ENCODE measurements at regions of chr9 and their contacts with region 1.

Region 1: DNA sequence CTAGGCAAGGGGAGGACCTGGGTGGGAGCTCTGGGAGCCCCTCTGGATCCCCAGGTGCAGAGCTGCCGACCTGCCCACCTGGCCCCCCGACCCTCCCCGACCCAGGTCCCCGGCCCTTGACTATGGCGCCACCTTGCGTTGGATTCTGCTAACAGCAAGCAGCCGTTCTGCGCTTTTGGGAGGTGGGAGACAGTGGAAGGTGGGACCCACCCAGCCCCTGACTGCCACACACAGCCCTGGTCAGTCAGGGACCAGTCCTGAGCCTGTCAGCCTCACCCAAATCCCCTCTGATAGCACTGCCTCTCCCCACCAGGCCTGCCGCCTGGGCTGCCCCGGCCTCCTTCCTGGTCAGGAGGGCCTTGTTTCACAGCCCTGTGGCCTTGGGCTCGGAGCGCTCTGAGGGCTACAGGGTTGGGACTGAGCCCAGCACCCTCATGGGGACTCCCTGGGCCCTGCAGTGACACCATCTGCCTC is 77.9 kb downstream of the HMCN2 start:
- DNase-seq: peak in 1 of 2 experiments; percentile 95
- H3K4me3 ChIP-seq: no peak overlapping the region
- H3K27ac ChIP-seq: no peak overlapping the region
- H3K4me1 ChIP-seq: peaks cover 0 to 12% (median 6%) of the 10 kb centered on the region in 4 experiments; a peak in 4 of 7 replicates
- H3K27me3 ChIP-seq: no peaks in the 10 kb centered on the region
- CTCF ChIP-seq: peak in 2 of 3 experiments; percentile 78 to 88; a peak in 3 of 4 replicates
- EP300 ChIP-seq: no peak
- POLR2A ChIP-seq: no peak
- RAD21 ChIP-seq: peak; percentile 94 to 96

Region 2: DNA sequence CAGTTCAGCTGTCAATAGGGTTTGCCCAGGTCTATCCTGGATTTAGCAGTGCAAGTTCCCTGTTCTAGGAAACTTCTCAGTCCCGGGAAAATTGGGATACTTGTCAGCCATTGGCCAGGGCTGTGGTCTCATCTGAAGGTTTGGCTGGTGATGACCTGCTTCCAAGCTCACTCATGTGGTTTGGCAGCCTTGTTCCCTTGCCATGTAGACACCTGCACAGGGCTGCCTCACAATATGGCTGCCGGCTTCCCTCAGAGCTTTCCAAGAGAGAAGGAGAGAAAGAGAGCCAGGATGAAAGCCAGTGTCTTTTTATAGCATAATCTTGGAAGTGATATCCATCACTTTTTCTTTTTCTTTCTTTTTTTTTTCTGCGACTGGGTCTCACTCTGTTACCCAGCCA is 115.6 kb before region 1 on chr9:
- CTCF ChIA-PET with region 1: no interaction called
- POLR2A ChIA-PET with region 1: no interaction called
- DNase-seq: no peak
- H3K4me3 ChIP-seq: no peak overlapping the region
- H3K27ac ChIP-seq: no peak overlapping the region
- H3K4me1 ChIP-seq: no peaks in the 10 kb centered on the region; a peak in 1 of 7 replicates
- H3K27me3 ChIP-seq: no peaks in the 10 kb centered on the region
- CTCF ChIP-seq: no peak
- EP300 ChIP-seq: no peak
- POLR2A ChIP-seq: no peak
- RAD21 ChIP-seq: no peak

Region 3: DNA sequence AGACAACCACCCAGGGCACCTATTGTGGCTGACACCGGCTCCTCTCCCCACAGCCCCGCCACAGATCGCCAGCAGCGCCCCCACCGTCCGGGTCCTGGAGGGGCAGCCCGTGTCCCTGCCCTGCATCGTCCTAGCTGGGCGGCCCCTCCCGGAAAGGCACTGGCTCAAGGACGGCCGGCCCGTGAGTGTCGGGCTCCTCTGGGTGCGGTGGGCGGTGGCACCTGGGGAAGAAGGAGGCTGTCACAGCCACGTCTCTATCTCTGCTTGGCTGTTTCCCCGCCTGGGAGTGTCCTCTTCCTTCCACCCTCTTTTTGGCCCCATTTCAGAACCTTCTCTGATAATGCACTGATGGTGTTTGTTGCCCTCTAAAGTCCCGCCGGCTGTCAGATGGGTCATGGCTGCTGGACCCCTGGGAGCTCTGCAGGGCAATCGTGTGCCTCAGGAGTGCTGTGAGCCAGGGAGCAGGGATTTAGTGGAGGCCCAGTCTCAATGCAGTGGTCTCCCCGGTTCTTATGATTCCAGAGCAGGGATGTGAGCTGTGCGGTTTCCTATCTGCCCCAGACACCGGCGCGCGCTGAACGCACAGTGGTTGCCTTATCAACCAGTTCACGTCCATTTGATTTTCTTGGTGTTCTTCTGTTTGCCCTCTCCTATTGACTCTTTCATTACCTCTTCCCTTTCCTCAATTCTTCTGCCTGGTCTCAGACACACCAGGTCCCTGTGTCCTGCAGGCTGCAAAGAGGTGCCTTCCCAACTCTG is 22.6 kb before region 1 on chr9:
- CTCF ChIA-PET with region 1: interaction called, 53 read pairs
- POLR2A ChIA-PET with region 1: no interaction called
- DNase-seq: peak in 1 of 2 experiments; percentile 79
- H3K4me3 ChIP-seq: no peak overlapping the region
- H3K27ac ChIP-seq: no peak overlapping the region
- H3K4me1 ChIP-seq: peaks cover 0 to 7% (median 1%) of the 10 kb centered on the region in 4 experiments; a peak in 4 of 7 replicates
- H3K27me3 ChIP-seq: no peaks in the 10 kb centered on the region
- CTCF ChIP-seq: peak; percentile 37 to 62 (median 44); a peak in 3 of 4 replicates
- EP300 ChIP-seq: no peak
- POLR2A ChIP-seq: no peak
- RAD21 ChIP-seq: peak in 1 of 2 experiments; percentile 42; a peak in 3 of 4 replicates

Region 4: DNA sequence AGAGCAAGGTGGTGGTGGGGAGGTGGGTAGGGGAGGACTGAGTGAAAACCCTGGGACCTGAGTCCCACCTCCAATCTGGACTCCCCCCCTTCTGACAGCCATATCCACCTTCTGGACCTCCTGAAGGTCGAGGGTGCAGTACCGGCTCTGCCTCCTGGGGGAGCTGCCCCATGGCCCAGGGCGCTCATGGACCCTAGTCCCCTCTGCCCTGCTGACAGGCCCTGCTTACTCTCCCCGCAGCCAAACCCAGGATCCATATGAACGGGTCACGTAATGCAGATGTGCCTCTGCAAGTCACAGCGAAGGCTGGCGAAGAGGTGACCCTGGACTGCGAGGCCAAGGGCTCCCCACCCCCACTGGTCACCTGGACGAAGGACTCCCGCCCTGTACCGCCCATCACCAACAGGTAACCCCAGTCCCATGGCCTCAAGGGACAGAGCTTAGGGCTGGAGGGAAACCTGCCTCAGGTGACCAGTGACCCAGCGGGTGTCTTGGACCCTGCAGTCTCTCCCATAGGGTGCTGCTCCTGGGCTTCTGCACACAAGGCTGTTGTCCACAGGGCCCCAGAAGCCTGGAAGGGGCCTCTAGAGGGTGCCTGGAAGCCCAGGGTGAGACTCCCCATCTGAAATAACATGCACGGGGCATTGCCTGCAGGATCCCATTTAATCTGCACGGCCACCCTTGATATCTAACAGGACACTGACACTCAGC is 16.3 kb before region 1 on chr9:
- CTCF ChIA-PET with region 1: interaction called, 53 read pairs
- POLR2A ChIA-PET with region 1: interaction called, 4 read pairs
- DNase-seq: peak in 1 of 2 experiments; percentile 92
- H3K4me3 ChIP-seq: no peak overlapping the region
- H3K27ac ChIP-seq: peak overlapping the region; percentile 43; the same call in 1 of the 2 replicates
- H3K4me1 ChIP-seq: no peaks in the 10 kb centered on the region; a peak in 1 of 7 replicates
- H3K27me3 ChIP-seq: no peaks in the 10 kb centered on the region
- CTCF ChIP-seq: peak in 2 of 3 experiments; percentile 66 to 84; a peak in 3 of 4 replicates
- EP300 ChIP-seq: no peak
- POLR2A ChIP-seq: no peak
- RAD21 ChIP-seq: peak; percentile 53 to 68

Region 5: GRCh38 chr9:130354806-130355205 is 11.3 kb after region 1 on chr9:
- CTCF ChIA-PET with region 1: interaction called, 15 read pairs
- POLR2A ChIA-PET with region 1: interaction called, 3 read pairs
- DNase-seq: no peak
- H3K4me3 ChIP-seq: no peak overlapping the region
- H3K27ac ChIP-seq: no peak overlapping the region
- H3K4me1 ChIP-seq: no peaks in the 10 kb centered on the region
- H3K27me3 ChIP-seq: no peaks in the 10 kb centered on the region
- CTCF ChIP-seq: no peak
- EP300 ChIP-seq: no peak
- POLR2A ChIP-seq: no peak
- RAD21 ChIP-seq: no peak

Region 6: DNA sequence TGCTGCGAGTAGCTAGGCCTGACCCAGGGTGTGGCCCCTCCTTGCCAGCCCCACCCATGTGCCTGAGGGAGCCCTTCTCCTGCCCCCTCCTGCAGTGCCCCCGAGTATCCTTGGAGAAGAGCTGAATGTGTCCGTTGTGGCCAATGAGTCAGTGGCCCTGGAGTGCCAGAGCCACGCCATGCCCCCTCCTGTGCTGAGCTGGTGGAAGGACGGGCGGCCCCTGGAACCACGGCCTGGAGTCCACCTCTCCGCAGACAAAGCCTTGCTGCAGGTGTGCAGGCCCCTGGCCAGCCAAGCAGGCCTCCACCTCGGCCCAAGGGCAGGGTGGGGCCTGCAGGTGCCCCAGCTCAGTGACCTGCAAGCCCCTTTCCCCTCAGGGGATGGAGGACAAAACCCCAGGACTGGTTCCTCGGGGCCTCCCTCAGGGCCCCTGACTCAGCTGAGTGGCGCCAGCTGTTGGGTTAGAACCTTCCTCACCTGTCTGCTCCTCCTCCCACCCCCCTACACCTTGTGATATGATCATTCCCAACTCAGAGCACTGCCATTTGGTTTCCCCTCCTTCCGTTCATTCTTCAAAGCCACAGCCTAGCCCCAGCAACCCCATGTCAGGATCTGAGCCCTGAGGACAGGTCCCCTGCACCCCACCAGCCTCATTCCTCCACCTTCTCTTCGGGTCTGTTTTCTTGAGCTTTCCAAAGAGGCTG is 21.3 kb after region 1 on chr9:
- CTCF ChIA-PET with region 1: interaction called, 13 read pairs
- POLR2A ChIA-PET with region 1: interaction called, 14 read pairs
- DNase-seq: no peak
- H3K4me3 ChIP-seq: no peak overlapping the region
- H3K27ac ChIP-seq: no peak overlapping the region
- H3K4me1 ChIP-seq: no peaks in the 10 kb centered on the region; a peak in 1 of 7 replicates
- H3K27me3 ChIP-seq: no peaks in the 10 kb centered on the region
- CTCF ChIP-seq: no peak
- EP300 ChIP-seq: no peak
- POLR2A ChIP-seq: no peak
- RAD21 ChIP-seq: no peak

Region 7: GRCh38 chr9:130396581-130396980 is 53.1 kb after region 1 on chr9:
- CTCF ChIA-PET with region 1: no interaction called
- POLR2A ChIA-PET with region 1: no interaction called
- DNase-seq: no peak
- H3K4me3 ChIP-seq: no peak overlapping the region
- H3K27ac ChIP-seq: no peak overlapping the region
- H3K4me1 ChIP-seq: no peaks in the 10 kb centered on the region
- H3K27me3 ChIP-seq: no peaks in the 10 kb centered on the region
- CTCF ChIP-seq: no peak
- EP300 ChIP-seq: no peak
- POLR2A ChIP-seq: no peak
- RAD21 ChIP-seq: no peak